ENCODE measurements at regions of chr2 and their contacts with region 1.

Region 1: DNA sequence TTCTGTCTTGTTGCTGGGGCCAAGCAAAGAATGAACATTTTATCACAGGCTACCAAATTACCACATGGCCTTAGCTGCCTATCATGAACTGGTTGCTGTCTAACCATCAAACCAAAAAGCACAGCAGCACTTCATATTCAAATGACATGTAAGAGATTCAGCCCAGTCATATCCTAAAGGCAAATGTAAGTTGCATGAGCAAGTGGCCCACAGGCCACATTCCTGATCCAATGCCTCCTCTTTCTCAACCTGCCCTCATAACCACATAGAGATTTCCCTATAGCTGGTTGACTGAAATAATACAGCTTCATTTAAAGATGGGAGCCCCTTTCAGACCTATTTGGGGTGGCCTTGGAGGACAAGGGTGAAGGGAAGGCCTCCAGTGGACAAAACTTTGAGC is 572.3 kb downstream of the IRS1 start:
- DNase-seq: no peak
- ATAC-seq: no peak
- H3K4me3 ChIP-seq: no peak overlapping the region
- H3K27ac ChIP-seq: no peak overlapping the region
- H3K4me1 ChIP-seq: no peaks in the 10 kb centered on the region
- H3K27me3 ChIP-seq: no peaks in the 10 kb centered on the region
- CTCF ChIP-seq: no peak
- POLR2A ChIP-seq: no peak

Region 2: DNA sequence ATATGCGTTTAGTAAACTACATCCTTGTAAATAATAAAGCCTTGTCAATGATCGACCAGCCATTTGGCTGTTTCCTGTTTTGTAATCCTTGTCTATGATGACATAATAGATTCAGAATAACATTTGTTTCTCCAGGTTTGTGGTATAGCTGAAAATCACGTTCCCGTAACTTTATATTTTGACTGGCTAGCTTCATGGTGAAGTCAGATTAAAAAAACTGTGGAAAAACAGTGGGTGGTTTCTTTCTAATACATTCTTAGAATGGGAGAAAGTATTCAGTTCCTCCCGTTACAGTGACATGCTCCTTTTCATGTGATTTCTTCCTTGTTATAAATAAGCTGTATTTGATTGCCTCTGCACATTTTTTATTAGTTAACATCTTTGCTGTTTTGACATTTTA is 460.9 kb before region 1 on chr2:
- intact Hi-C with region 1: no loop called
- DNase-seq: no peak
- ATAC-seq: no peak
- H3K4me3 ChIP-seq: no peak overlapping the region
- H3K27ac ChIP-seq: peak overlapping the region in 3 of 12 donors; percentile 9 to 26 (median 19)
- H3K4me1 ChIP-seq: peaks cover 0 to 13% (median 0%) of the 10 kb centered on the region in 12 donors
- H3K27me3 ChIP-seq: no peaks in the 10 kb centered on the region
- CTCF ChIP-seq: no peak
- POLR2A ChIP-seq: no peak

Region 3: GRCh38 chr2:226080334-226080733 is 147.0 kb before region 1 on chr2:
- intact Hi-C with region 1: no loop called
- DNase-seq: no peak
- ATAC-seq: no peak
- H3K4me3 ChIP-seq: no peak overlapping the region
- H3K27ac ChIP-seq: no peak overlapping the region
- H3K4me1 ChIP-seq: peaks cover 0 to 7% (median 0%) of the 10 kb centered on the region in 12 donors
- H3K27me3 ChIP-seq: no peaks in the 10 kb centered on the region
- CTCF ChIP-seq: no peak
- POLR2A ChIP-seq: no peak

Region 4: GRCh38 chr2:226169751-226170581 is 57.4 kb before region 1 on chr2:
- intact Hi-C with region 1: loop called in 1 of 10 experiments (anchors 2 kb)
- DNase-seq: no peak
- ATAC-seq: no peak
- H3K4me3 ChIP-seq: no peak overlapping the region
- H3K27ac ChIP-seq: no peak overlapping the region
- H3K4me1 ChIP-seq: no peaks in the 10 kb centered on the region
- H3K27me3 ChIP-seq: no peaks in the 10 kb centered on the region
- CTCF ChIP-seq: no peak
- POLR2A ChIP-seq: no peak

Measured in heart left ventricle (tissue), 16 donors.